ENCODE measurements at regions of chr5 and their contacts with region 1.

Region 1: GRCh38 chr5:54517174-54518092 is at the start of gene SNX18:
- DNase-seq: peak; percentile 80 to 92 (median 88)
- H3K4me3 ChIP-seq: peak within 1 kb of the TSS; percentile 74 to 99 (median 93)
- H3K27ac ChIP-seq: peak within 1 kb of the TSS; percentile 40 to 98 (median 94)
- H3K27me3 ChIP-seq: no peaks in the 10 kb centered on the region
- CTCF ChIP-seq: peak; percentile 85 to 100 (median 97)
- total RNA-seq, gene SNX18: 15.1 to 35.3 (median 21.5) TPM

Region 2: GRCh38 chr5:54310433-54311175 is 206.8 kb before region 1 on chr5 and contains the start of gene ARL15:
- intact Hi-C with region 1: loop called in 1 of 2 experiments (anchors 10 kb)
- DNase-seq: peak; percentile 98 to 100 (median 99)
- H3K4me3 ChIP-seq: peak within 1 kb of the TSS; percentile 62 to 98 (median 90)
- H3K27ac ChIP-seq: peak within 1 kb of the TSS in 55 of 59 donors; percentile 56 to 95 (median 80)
- H3K27me3 ChIP-seq: no peaks in the 10 kb centered on the region
- CTCF ChIP-seq: peak in 34 of 56 donors; percentile 6 to 51 (median 22)
- total RNA-seq, gene ARL15: 16.5 to 55.0 (median 31.4) TPM

Region 3: DNA sequence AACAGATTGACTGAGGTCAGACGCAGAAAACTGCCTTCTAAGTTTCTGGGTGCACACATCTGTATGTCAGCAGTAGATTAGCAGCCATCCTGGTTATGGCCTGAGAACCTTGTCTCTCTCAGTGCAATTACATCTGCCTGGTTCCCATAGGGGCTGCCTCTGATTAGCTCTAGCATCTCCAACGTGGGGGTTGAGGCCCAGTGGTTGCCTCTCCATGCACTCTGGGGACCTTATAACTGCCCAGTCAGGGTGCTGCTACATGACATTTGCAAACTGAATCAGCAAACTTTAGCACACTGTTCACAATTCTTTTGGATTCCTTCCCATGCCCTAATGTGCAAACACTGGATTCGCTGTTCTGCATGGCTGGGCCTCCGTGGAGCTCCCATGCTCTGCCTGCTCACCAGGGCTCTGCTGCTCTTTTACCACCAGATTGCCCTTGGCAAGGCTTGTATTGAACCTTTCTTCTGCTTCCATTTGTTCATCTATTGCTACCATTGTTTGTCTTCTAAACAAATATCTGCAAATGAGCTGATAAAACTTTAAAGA is 36.3 kb after region 1 on chr5:
- intact Hi-C with region 1: loop called (anchors 2 to 5 kb)
- DNase-seq: peak in 9 of 10 donors; percentile 40 to 81 (median 72)
- H3K4me3 ChIP-seq: peak overlapping the region in 6 of 59 donors; percentile 0 to 20 (median 8)
- H3K27ac ChIP-seq: peak overlapping the region in 58 of 59 donors; percentile 7 to 90 (median 78)
- H3K27me3 ChIP-seq: no peaks in the 10 kb centered on the region
- CTCF ChIP-seq: peak in 10 of 56 donors; percentile 13 to 39 (median 26)

Region 4: DNA sequence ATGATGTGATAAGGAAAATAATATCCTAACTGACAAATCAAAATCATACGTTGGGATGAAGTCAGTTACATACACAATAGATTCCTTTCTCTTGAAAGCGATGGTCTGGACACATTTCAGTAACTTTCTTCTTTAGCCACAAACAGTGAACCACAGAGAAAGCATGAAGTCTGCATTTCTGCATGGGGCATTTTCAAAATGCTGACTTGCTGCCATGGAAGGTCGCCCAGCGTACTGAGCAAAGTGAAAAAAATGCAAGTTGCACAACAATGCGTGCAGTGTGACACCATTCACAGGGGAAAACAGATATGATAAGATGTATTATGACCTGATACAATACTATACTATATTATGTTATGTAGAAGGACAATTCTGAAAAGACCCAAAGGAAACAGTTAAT is 146.4 kb after region 1 on chr5:
- intact Hi-C with region 1: loop called in 1 of 2 experiments (anchors 2 kb)
- DNase-seq: peak in 5 of 10 donors; percentile 36 to 70 (median 55)
- H3K4me3 ChIP-seq: peak overlapping the region in 15 of 59 donors; percentile 1 to 36 (median 9)
- H3K27ac ChIP-seq: peak overlapping the region in 36 of 59 donors; percentile 1 to 78 (median 39)
- H3K27me3 ChIP-seq: no peaks in the 10 kb centered on the region
- CTCF ChIP-seq: peak in 4 of 56 donors; percentile 6 to 18 (median 13)

Region 5: GRCh38 chr5:54753034-54753433 is 235.6 kb after region 1 on chr5:
- intact Hi-C with region 1: loop called in 1 of 2 experiments (anchors 10 kb)
- DNase-seq: no peak
- H3K4me3 ChIP-seq: no peak overlapping the region
- H3K27ac ChIP-seq: no peak overlapping the region
- H3K27me3 ChIP-seq: no peaks in the 10 kb centered on the region
- CTCF ChIP-seq: no peak

Region 6: GRCh38 chr5:54844905-54845566 is 327.6 kb after region 1 on chr5:
- intact Hi-C with region 1: loop called (anchors 1 to 2 kb)
- DNase-seq: no peak
- H3K4me3 ChIP-seq: peak overlapping the region in 57 of 59 donors; percentile 4 to 65 (median 40)
- H3K27ac ChIP-seq: peak overlapping the region in 41 of 59 donors; percentile 2 to 76 (median 48)
- H3K27me3 ChIP-seq: no peaks in the 10 kb centered on the region
- CTCF ChIP-seq: peak; percentile 64 to 95 (median 79)

Region 7: DNA sequence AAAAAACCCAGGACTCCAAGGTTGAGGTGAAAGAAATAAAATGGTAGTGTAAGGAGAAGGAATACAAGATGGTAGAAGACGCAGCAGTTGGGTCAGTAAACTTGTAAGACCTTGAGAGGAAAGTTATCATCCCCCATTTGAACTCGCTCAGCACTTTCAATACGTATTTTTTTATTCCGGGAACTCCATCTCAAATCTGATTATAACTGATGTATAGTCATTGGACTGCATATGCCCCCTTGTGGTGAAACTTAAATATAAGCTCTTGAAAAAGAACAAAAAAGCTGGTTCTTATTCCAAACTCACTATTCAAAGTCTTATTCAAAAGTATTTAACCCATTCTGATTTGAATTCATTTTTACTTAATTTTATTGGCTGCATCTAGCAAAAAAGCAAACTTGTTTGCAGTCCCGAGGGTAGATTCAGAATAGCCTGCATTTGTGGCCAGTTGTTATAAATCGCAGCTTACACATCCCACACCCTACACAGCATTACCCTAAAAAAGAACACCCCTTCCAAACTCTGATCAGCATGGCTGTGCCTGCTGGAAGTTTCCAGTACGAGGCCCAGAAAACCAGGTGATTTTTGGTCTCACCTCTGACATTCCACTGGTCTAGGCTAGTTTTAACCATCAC is 350.0 kb after region 1 on chr5:
- intact Hi-C with region 1: loop called (anchors 2 to 5 kb)
- DNase-seq: no peak
- H3K4me3 ChIP-seq: peak overlapping the region in 21 of 59 donors; percentile 2 to 44 (median 26)
- H3K27ac ChIP-seq: no peak overlapping the region
- H3K27me3 ChIP-seq: peaks cover 0 to 4% (median 0%) of the 10 kb centered on the region in 45 donors
- CTCF ChIP-seq: peak; percentile 65 to 91 (median 78)

Measured in dorsolateral prefrontal cortex (tissue), 120 donors.